Mammary epithelial cell (primary cell): ENCODE measurements at regions of chr7 and their contacts with region 1.

Region 1: GRCh38 chr7:15720849-15721471 is 34.5 kb upstream of the MEOX2 start:
- DNase-seq: peak; percentile 13
- H3K4me3 ChIP-seq: no peak overlapping the region
- H3K27ac ChIP-seq: no peak overlapping the region
- H3K4me1 ChIP-seq: no peaks in the 10 kb centered on the region
- H3K27me3 ChIP-seq: no peaks in the 10 kb centered on the region
- CTCF ChIP-seq: peak; percentile 71 to 77

Region 2: GRCh38 chr7:14717816-14718215 is 1003.1 kb before region 1 on chr7:
- CTCF ChIA-PET with region 1: no interaction called
- dilution Hi-C with region 1: no loop called
- in situ Hi-C with region 1: loop called in 1 of 2 experiments (anchors 25 kb)
- intact Hi-C with region 1: loop called (anchors 5 kb)
- DNase-seq: no peak
- H3K4me3 ChIP-seq: no peak overlapping the region
- H3K27ac ChIP-seq: no peak overlapping the region
- H3K4me1 ChIP-seq: no peaks in the 10 kb centered on the region
- H3K27me3 ChIP-seq: no peaks in the 10 kb centered on the region
- CTCF ChIP-seq: peak; percentile 37 to 60

Region 3: DNA sequence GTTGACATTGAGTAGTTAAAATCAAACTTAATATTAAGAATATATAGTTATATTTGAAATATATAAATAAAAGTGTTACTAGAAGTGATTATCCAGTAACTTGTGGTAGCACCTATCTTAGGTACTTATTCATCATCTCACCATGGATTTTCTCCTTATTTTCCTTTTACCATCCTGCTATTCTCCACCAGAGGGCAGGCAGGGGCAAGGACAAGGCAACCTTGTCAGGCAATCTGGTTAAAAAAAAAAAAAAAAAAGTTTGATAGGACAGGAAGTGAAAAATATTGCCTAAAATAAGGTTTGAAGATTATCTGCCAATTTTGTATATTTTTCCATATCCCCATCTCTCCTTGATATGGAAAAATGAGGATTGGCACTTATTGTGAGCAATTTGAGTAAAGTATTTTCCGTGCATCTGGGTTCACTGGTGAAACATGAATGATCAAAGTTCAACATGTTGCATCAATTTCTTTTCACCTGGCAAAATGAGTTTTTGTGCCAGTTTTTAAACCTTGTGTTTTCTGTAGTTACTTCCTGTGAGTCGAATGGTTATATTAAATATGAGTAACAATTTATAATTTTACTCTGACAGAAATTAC is 415.9 kb before region 1 on chr7:
- CTCF ChIA-PET with region 1: no interaction called
- dilution Hi-C with region 1: no loop called
- in situ Hi-C with region 1: no loop called
- intact Hi-C with region 1: loop called (anchors 1 kb)
- DNase-seq: peak; percentile 33
- H3K4me3 ChIP-seq: no peak overlapping the region
- H3K27ac ChIP-seq: no peak overlapping the region
- H3K4me1 ChIP-seq: no peaks in the 10 kb centered on the region
- H3K27me3 ChIP-seq: no peaks in the 10 kb centered on the region
- CTCF ChIP-seq: peak; percentile 72 to 79

Region 4: GRCh38 chr7:15326044-15326644 is 394.8 kb before region 1 on chr7:
- CTCF ChIA-PET with region 1: no interaction called
- dilution Hi-C with region 1: no loop called
- in situ Hi-C with region 1: no loop called
- intact Hi-C with region 1: loop called (anchors 1 kb)
- DNase-seq: no peak
- H3K4me3 ChIP-seq: no peak overlapping the region
- H3K27ac ChIP-seq: no peak overlapping the region
- H3K4me1 ChIP-seq: no peaks in the 10 kb centered on the region
- H3K27me3 ChIP-seq: no peaks in the 10 kb centered on the region
- CTCF ChIP-seq: peak; percentile 12 to 51

Region 5: DNA sequence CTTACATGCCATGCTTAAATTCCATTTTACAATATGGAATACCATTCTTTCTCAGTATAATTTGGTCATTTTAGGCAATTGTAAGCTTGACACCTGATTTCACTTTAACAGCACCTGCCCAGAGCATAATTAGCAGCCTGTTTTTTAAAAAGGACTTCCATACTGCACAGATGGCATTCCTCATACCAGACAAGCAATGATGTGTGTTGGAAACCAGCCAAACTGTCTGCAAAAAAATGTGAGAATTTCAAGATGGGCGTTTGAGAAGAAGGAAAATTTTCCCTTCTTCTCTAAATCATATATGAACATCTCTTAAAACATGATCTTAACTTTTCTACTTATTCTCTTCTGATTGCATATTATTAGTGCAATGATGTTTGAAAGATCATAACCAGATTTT is 118.7 kb before region 1 on chr7:
- CTCF ChIA-PET with region 1: no interaction called
- dilution Hi-C with region 1: no loop called
- in situ Hi-C with region 1: no loop called
- intact Hi-C with region 1: no loop called
- DNase-seq: no peak
- H3K4me3 ChIP-seq: no peak overlapping the region
- H3K27ac ChIP-seq: no peak overlapping the region
- H3K4me1 ChIP-seq: no peaks in the 10 kb centered on the region
- H3K27me3 ChIP-seq: no peaks in the 10 kb centered on the region
- CTCF ChIP-seq: no peak

Region 6: GRCh38 chr7:15669443-15670090 is 51.4 kb before region 1 on chr7:
- CTCF ChIA-PET with region 1: no interaction called
- dilution Hi-C with region 1: loop called (anchors 5 kb)
- in situ Hi-C with region 1: no loop called
- intact Hi-C with region 1: no loop called
- DNase-seq: no peak
- H3K4me3 ChIP-seq: no peak overlapping the region
- H3K27ac ChIP-seq: no peak overlapping the region
- H3K4me1 ChIP-seq: no peaks in the 10 kb centered on the region
- H3K27me3 ChIP-seq: no peaks in the 10 kb centered on the region
- CTCF ChIP-seq: no peak

Region 7: GRCh38 chr7:16564909-16565426 is 844.0 kb after region 1 on chr7:
- CTCF ChIA-PET with region 1: interaction called, 24 read pairs
- dilution Hi-C with region 1: no loop called
- in situ Hi-C with region 1: no loop called
- intact Hi-C with region 1: no loop called
- DNase-seq: peak; percentile 39
- H3K4me3 ChIP-seq: no peak overlapping the region
- H3K27ac ChIP-seq: no peak overlapping the region
- H3K4me1 ChIP-seq: no peaks in the 10 kb centered on the region
- H3K27me3 ChIP-seq: no peaks in the 10 kb centered on the region
- CTCF ChIP-seq: peak; percentile 69 to 70